CD4-positive, alpha-beta memory T cell (primary cell): ENCODE measurements at regions of chr2 and their contacts with region 1.

Region 1: DNA sequence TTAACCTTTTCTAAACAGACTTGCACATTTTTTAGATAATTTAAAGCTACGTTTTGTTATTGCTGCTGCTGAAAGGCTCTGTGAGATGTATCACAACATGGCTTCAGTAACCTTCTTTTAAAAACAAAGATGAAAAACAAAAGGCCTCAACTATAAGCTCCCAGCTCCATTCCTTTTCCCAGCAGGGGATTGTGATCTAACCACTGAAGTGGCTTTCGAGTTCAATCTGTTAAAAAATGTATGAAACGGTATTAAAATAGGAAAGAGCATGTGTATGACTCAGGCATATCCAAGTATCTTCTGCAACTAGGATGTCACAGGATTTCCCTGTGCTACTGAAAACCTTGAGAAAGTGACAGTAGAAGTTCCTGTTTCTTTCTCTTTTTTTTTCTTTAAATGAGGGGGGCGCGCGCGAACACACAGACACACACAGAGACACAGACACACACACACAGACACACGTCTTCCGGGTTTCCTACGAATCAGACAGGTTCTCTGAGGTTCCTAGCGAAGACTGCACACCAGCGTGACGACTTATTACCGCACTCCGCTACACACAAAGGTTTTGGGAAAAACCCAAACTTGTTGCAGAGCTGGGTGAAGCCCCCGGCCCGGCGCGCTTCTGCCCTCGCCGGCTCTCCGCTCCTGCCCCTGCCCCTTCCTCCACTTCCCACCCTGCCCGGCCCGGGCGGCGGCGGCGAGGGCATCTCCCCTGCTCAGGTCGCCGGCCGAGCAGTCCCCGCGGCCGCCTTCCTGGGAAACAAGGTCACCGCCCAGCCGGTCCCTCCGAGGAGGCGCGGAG is 86.8 kb downstream of the RBMS1 start:
- DNase-seq: peak; percentile 79 to 96 (median 86)
- H3K4me3 ChIP-seq: peak overlapping the region; percentile 56 to 87
- H3K4me3 Mint-ChIP-seq: peak overlapping the region; percentile 90 to 98 (median 92)
- H3K27ac ChIP-seq: peak overlapping the region; percentile 73
- H3K27ac Mint-ChIP-seq: peak overlapping the region; percentile 91 to 99 (median 91)
- H3K4me1 ChIP-seq: peaks cover 82% of the 10 kb centered on the region
- H3K4me1 Mint-ChIP-seq: peaks cover 69 to 88% (median 78%) of the 10 kb centered on the region in 4 donors
- H3K27me3 ChIP-seq: no peaks in the 10 kb centered on the region
- H3K27me3 Mint-ChIP-seq: no peaks in the 10 kb centered on the region

Region 2: GRCh38 chr2:160258486-160258805 is 148.3 kb before region 1 on chr2:
- CTCF ChIA-PET with region 1: no interaction called
- POLR2A ChIA-PET with region 1: no interaction called
- intact Hi-C with region 1: no loop called
- DNase-seq: no peak
- H3K4me3 ChIP-seq: no peak overlapping the region
- H3K4me3 Mint-ChIP-seq: no peak overlapping the region
- H3K27ac ChIP-seq: no peak overlapping the region
- H3K27ac Mint-ChIP-seq: no peak overlapping the region
- H3K4me1 ChIP-seq: no peaks in the 10 kb centered on the region
- H3K4me1 Mint-ChIP-seq: no peaks in the 10 kb centered on the region
- H3K27me3 ChIP-seq: no peaks in the 10 kb centered on the region
- H3K27me3 Mint-ChIP-seq: no peaks in the 10 kb centered on the region

Region 3: GRCh38 chr2:160269803-160270570 is 136.8 kb before region 1 on chr2:
- CTCF ChIA-PET with region 1: interaction called, 3 read pairs
- POLR2A ChIA-PET with region 1: interaction called, 5 read pairs
- intact Hi-C with region 1: loop called (anchors 5 kb)
- DNase-seq: peak; percentile 64 to 75 (median 69)
- H3K4me3 ChIP-seq: peak overlapping the region; percentile 30 to 59
- H3K4me3 Mint-ChIP-seq: peak overlapping the region; percentile 81 to 90 (median 87)
- H3K27ac ChIP-seq: peak overlapping the region; percentile 64
- H3K27ac Mint-ChIP-seq: peak overlapping the region; percentile 91 to 97 (median 94)
- H3K4me1 ChIP-seq: peaks cover 29% of the 10 kb centered on the region
- H3K4me1 Mint-ChIP-seq: peaks cover 20 to 48% (median 32%) of the 10 kb centered on the region in 4 donors
- H3K27me3 ChIP-seq: no peaks in the 10 kb centered on the region
- H3K27me3 Mint-ChIP-seq: no peaks in the 10 kb centered on the region

Region 4: DNA sequence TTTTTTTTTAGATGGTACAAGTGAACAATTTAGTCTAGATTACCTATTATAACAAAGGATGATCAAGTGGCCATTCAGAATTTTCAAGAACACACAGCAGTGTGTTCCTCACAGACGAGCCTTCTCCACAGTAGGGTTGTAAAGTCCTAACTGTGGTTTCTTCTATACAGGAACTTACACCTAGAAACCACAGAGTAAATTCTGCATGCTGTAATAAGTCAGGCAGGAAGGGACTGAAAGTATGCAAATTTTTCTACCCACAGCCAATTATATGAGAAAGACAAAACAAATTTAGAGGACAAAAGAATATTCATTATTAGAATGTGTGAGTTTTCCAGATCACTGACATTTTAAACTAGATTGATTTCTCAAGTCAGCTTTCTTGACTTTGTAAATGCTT is 12.6 kb before region 1 on chr2:
- CTCF ChIA-PET with region 1: interaction called, 8 read pairs
- POLR2A ChIA-PET with region 1: interaction called, 28 read pairs
- intact Hi-C with region 1: loop called (anchors 1 kb)
- DNase-seq: peak in 4 of 5 donors; percentile 53 to 62 (median 55)
- H3K4me3 ChIP-seq: peak overlapping the region in 1 of 2 donors; percentile 27
- H3K4me3 Mint-ChIP-seq: peak overlapping the region in 7 of 8 donors; percentile 47 to 82 (median 57)
- H3K27ac ChIP-seq: peak overlapping the region; percentile 21
- H3K27ac Mint-ChIP-seq: peak overlapping the region; percentile 66 to 87 (median 71)
- H3K4me1 ChIP-seq: peaks cover 99% of the 10 kb centered on the region
- H3K4me1 Mint-ChIP-seq: peaks cover 45 to 67% (median 55%) of the 10 kb centered on the region in 4 donors
- H3K27me3 ChIP-seq: no peaks in the 10 kb centered on the region
- H3K27me3 Mint-ChIP-seq: no peaks in the 10 kb centered on the region

Region 5: DNA sequence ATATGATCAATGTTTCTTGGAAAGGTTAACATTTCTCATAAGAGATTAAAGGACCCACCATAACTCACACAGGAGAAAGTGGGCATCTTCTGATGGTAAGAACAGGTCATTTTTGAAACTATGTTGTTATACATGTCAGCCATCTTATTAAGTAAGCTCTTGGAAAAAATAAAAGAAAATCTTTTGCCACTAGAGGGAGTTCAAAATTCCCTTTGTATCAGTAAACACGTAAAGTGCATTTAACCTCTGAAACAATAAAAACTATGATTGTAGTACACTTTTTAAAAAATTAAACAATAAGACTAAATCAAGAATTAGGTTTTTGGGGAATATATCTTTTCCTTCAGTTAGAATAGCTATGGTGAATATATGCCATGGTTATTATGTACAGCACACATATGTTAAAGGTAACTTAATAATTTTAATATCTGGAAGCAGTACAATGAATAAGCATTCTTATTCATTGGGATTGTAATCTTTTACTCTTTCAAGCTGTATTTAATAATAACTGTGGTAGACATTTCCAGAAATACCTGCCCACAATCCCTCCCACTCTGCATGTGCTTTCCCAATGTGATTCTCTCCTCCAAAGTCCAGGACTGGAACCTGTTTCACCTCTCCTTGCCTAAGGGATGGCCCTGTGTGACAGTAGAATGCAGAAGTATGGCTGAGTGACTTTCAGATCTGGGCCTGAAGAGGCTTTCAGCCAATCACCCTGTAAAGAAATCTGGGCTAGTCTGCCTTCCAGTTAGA is 22.6 kb after region 1 on chr2:
- CTCF ChIA-PET with region 1: interaction called, 42 read pairs
- POLR2A ChIA-PET with region 1: interaction called, 52 read pairs
- intact Hi-C with region 1: loop called (anchors 1 kb)
- DNase-seq: peak in 4 of 5 donors; percentile 54 to 65 (median 60)
- H3K4me3 ChIP-seq: no peak overlapping the region
- H3K4me3 Mint-ChIP-seq: peak overlapping the region in 2 of 8 donors; percentile 28 to 56
- H3K27ac ChIP-seq: peak overlapping the region; percentile 17
- H3K27ac Mint-ChIP-seq: peak overlapping the region; percentile 77 to 92 (median 87)
- H3K4me1 ChIP-seq: peaks cover 58% of the 10 kb centered on the region
- H3K4me1 Mint-ChIP-seq: peaks cover 40 to 79% (median 59%) of the 10 kb centered on the region in 4 donors
- H3K27me3 ChIP-seq: no peaks in the 10 kb centered on the region
- H3K27me3 Mint-ChIP-seq: no peaks in the 10 kb centered on the region

Region 6: DNA sequence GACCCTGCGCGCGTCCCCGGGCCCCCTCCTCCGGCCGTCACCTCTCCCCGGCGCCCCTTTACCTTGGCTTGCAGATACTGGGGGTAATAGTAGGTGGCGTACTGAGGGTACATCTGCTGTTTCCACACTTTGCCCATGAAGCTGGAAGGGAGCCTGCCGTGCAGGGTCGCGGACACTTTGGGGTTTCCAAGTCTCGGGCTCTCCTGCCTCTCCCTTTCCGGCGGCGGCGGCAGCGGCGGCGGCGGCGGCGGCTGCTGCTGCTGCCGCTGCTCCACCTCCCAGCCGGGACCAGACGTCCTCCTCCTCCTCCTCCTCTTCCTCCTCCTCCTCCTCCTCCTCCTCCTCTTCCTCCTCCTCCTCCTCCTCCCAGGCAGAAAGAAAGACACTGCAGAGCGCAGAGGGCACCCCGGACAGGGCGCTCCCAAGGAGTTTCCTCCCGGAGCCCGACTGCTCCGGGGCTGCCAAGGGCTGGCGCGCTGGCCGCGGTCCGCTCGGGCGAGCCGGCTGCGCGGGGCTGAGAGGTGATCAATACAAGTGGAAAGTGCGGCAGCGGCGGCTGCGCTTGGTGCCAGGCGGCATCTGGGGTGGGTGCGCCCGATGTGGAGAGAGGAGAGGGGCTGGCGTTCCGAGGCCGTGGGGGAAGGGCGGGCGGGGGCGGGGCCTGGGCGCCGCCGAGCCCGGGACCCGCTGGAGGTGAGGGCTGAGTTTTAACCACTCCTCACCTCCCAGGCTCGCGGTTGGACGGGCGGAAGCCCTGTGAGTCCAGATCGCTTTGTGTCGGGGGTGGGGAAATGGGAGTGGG is 86.6 kb after region 1 on chr2 and contains the start of gene RBMS1:
- CTCF ChIA-PET with region 1: no interaction called
- POLR2A ChIA-PET with region 1: interaction called, 5 read pairs
- intact Hi-C with region 1: loop called (anchors 2 kb)
- DNase-seq: peak; percentile 47 to 69 (median 51)
- H3K4me3 ChIP-seq: peak within 1 kb of the TSS; percentile 49 to 64
- H3K4me3 Mint-ChIP-seq: peak within 1 kb of the TSS; percentile 91 to 98 (median 95)
- H3K27ac ChIP-seq: peak within 1 kb of the TSS; percentile 81
- H3K27ac Mint-ChIP-seq: peak within 1 kb of the TSS; percentile 85 to 97 (median 90)
- H3K4me1 ChIP-seq: peaks cover 43% of the 10 kb centered on the region
- H3K4me1 Mint-ChIP-seq: peaks cover 21 to 46% (median 32%) of the 10 kb centered on the region in 4 donors
- H3K27me3 ChIP-seq: no peaks in the 10 kb centered on the region
- H3K27me3 Mint-ChIP-seq: no peaks in the 10 kb centered on the region
- total RNA-seq, gene RBMS1: 101 to 103 TPM